ENCODE measurements at regions of chr3 and their contacts with region 1.

Region 1: GRCh38 chr3:108406661-108407206 is 103.7 kb downstream of the MYH15 start:
- DNase-seq: peak; percentile 74
- CTCF ChIP-seq: peak; percentile 69

Region 2: DNA sequence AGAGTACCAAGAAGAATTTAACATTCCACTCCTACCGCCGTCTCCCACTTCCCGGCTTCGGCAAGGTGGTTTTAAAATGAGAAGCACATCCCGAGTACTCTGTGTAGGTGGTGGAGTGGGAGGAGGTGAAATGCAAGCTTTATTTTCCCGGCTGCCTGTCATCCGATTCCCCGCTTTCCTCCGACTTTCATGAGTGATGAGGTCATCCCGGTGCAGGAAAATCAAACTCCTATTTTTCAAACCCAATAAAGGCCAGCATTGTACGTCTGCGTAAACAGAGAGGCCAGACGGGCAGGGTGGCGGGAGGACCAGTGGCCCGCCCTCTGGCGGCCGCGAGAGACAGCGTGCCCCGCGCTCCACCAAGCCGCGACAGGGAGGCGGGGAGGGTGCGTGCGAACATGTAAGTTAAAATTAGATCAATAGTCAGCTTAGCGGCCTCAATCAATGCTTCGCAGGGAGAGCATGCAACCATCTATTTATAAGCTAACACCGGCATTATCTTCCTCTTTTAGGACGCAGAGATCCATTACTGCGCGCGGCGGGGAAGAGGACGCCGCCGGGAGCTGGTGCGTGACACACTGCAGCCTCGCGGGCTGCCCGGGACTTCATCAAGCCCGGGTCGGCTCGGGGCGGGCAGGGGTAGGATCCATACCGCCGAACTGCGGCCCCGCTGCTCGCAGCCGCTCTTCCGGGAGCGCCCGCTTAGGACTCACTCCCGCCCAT is 479.2 kb before region 1 on chr3:
- in situ Hi-C with region 1: loop called (anchors 25 kb)
- DNase-seq: peak; percentile 89
- CTCF ChIP-seq: peak; percentile 89

Region 3: GRCh38 chr3:108153451-108153981 is 253.2 kb before region 1 on chr3:
- in situ Hi-C with region 1: loop called (anchors 5 kb)
- DNase-seq: peak; percentile 44
- CTCF ChIP-seq: no peak

Region 4: DNA sequence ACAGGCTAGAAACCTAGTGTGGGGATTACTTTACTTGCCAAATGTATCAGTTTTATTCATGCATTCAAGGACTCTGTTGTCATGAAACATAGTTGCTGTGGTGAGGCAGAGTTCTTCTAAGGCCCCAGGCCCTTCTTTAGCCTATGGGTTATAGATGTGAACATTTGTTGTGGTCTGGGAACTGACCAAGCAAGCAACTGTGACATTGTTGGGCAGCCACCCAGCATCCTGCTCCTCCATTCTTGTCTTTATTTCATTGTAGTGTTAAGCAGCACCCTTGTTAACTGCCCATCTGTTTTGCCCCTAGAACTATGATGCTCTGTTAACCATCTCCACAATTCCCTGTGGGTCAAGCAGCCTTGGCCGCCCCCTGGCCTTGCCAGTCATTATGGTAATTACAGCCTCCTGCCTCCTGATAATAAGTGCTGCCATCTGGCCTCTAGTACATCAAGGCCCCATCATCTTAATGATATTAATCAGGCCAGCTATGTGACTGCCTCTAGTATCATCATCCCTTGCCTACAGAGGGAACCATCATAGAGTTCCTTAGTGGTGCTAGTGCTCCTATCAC is 172.3 kb before region 1 on chr3:
- in situ Hi-C with region 1: no loop called
- DNase-seq: no peak
- CTCF ChIP-seq: no peak

Region 5: DNA sequence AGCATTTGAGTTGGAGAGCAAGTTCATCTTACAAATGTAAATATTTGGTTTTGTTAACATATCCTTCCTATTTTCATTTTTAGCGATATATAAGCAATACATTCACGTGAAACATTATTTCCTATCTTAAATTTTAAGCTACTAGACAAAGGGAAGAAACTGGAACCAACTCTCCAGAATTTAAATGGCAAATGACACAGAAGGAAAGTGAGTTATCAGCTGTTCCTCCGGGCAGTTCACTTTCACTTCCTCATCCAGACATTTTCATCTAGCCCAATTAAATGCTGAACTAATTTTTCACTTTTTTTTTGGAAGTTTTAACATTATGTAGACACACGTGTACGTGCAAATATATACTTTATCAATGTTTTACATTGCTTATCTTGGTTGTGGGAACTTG is 652.5 kb after region 1 on chr3:
- in situ Hi-C with region 1: no loop called
- DNase-seq: peak; percentile 26
- CTCF ChIP-seq: no peak